ENCODE measurements at regions of chr5 and their contacts with region 1.

Region 1: DNA sequence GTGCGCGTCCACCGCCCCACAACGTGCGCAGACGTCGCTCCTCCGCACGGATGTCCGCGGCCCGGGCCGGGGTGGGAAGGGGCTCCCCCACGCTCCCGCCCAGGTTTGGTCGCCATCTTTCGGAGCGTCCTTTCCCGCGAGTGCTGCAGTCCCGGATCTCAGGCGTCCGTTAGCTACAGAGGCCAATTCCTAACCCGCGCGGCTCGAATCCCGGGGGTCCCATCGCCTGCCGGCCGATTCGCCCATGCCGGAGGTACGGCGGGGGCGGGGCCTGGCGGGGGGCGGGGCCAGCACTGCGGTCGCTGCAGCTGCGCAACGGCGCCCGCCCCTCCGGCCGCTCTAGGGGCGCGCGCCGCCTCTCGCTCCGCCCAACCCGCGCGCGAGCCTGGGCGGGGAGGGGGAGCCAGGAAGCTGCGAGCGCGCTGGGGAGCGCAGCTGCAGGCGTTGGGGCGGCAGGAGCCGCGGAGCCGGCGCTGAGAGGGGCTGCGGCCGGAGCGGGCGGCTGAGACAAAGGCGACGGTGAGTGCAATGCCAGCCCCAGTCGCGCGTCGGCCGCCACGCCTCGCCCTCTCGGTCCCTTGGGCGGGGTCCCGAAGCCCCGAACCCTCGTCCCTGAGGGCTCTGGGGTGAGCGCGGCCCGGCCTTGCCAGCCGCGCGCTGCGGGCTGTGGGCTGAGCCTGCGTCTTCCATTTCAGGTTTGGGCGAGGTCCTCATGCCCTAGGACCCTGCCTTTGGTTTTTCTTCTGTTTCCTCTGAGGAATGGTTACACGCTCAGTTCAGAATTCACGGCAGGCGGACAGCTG is at the start of gene CDC42SE2:
- DNase-seq: peak; percentile 81 to 92 (median 88)
- ATAC-seq: peak; percentile 78 to 84
- H3K4me3 Mint-ChIP-seq: peak within 1 kb of the TSS; percentile 79 to 98 (median 91)
- H3K27ac Mint-ChIP-seq: peak within 1 kb of the TSS; percentile 93 to 98 (median 96)
- H3K4me1 Mint-ChIP-seq: peaks cover 11 to 64% (median 39%) of the 10 kb centered on the region in 4 donors
- H3K27me3 Mint-ChIP-seq: no peaks in the 10 kb centered on the region
- polyA plus RNA-seq, gene CDC42SE2: 423 to 544 (median 480) TPM

Region 2: DNA sequence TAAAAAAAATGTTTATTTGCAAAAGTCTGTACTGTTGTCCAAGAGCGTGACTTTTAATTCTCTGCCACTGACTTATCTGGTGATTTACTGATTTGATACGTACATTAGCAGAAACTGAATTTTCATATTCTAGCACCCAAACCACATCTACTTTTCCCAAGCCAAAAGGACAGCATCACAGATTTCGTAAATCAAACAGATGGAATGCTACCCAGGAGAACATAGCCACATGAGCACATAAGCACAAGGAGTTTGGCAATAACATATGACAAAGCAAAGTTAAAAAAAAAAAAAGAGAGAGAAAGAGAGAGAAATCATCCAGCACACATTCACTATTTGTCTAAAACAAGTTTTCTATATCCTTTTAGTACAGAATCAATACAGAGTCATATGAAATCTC is 182.5 kb before region 1 on chr5:
- POLR2A ChIA-PET with region 1: no interaction called
- DNase-seq: no peak
- ATAC-seq: no peak
- H3K4me3 Mint-ChIP-seq: no peak overlapping the region
- H3K27ac Mint-ChIP-seq: no peak overlapping the region
- H3K4me1 Mint-ChIP-seq: peaks cover 5 to 25% (median 20%) of the 10 kb centered on the region in 4 donors
- H3K27me3 Mint-ChIP-seq: no peaks in the 10 kb centered on the region

Region 3: GRCh38 chr5:131170540-131171275 is 93.1 kb before region 1 on chr5 and contains the start of gene LYRM7:
- POLR2A ChIA-PET with region 1: interaction called, 63 read pairs
- DNase-seq: peak; percentile 77 to 99 (median 96)
- ATAC-seq: peak; percentile 94
- H3K4me3 Mint-ChIP-seq: peak within 1 kb of the TSS; percentile 94 to 100 (median 98)
- H3K27ac Mint-ChIP-seq: peak within 1 kb of the TSS; percentile 88 to 99 (median 96)
- H3K4me1 Mint-ChIP-seq: peaks cover 32 to 59% (median 49%) of the 10 kb centered on the region in 4 donors
- H3K27me3 Mint-ChIP-seq: no peaks in the 10 kb centered on the region
- polyA plus RNA-seq, gene LYRM7: 9.3 to 13.6 (median 9.8) TPM

Region 4: GRCh38 chr5:131252824-131253171 is 11.1 kb before region 1 on chr5:
- POLR2A ChIA-PET with region 1: interaction called, 159 read pairs
- DNase-seq: peak; percentile 57 to 91 (median 81)
- ATAC-seq: peak; percentile 79 to 89
- H3K4me3 Mint-ChIP-seq: peak overlapping the region; percentile 81 to 98 (median 94)
- H3K27ac Mint-ChIP-seq: peak overlapping the region; percentile 85 to 100 (median 96)
- H3K4me1 Mint-ChIP-seq: peaks cover 30 to 81% (median 74%) of the 10 kb centered on the region in 4 donors
- H3K27me3 Mint-ChIP-seq: no peaks in the 10 kb centered on the region

Region 5: DNA sequence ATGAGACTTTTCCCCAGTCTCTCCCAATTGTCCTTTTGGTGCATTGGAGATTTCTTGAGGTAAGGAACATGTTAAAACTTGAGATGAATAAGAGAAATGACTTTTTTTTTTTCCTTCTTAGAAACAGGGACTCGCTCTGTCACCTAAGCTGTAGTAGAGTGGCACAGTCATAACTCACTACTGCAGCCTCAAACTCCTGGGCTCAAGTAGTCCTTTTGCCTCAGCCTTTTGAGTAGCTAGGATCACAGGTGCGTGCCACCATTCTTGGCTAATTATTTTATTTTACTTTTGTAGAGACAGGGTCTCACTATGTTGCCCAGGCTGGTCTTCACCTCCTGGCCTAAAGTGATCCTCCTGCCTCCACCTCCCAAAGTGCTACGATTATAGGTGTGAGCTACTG is 25.9 kb after region 1 on chr5:
- POLR2A ChIA-PET with region 1: interaction called, 36 read pairs
- DNase-seq: no peak
- ATAC-seq: peak; percentile 49 to 50
- H3K4me3 Mint-ChIP-seq: peak overlapping the region; percentile 79 to 91 (median 88)
- H3K27ac Mint-ChIP-seq: peak overlapping the region; percentile 95 to 98 (median 97)
- H3K4me1 Mint-ChIP-seq: peaks cover 24 to 92% (median 68%) of the 10 kb centered on the region in 4 donors
- H3K27me3 Mint-ChIP-seq: no peaks in the 10 kb centered on the region

Region 6: GRCh38 chr5:131375351-131375750 is 111.5 kb after region 1 on chr5:
- POLR2A ChIA-PET with region 1: interaction called, 159 read pairs
- DNase-seq: peak in 1 of 10 donors; percentile 31
- ATAC-seq: peak in 1 of 2 donors; percentile 18
- H3K4me3 Mint-ChIP-seq: peak overlapping the region in 9 of 10 donors; percentile 9 to 75 (median 29)
- H3K27ac Mint-ChIP-seq: peak overlapping the region; percentile 91 to 100 (median 95)
- H3K4me1 Mint-ChIP-seq: peaks cover 27 to 98% (median 85%) of the 10 kb centered on the region in 4 donors
- H3K27me3 Mint-ChIP-seq: no peaks in the 10 kb centered on the region

Region 7: DNA sequence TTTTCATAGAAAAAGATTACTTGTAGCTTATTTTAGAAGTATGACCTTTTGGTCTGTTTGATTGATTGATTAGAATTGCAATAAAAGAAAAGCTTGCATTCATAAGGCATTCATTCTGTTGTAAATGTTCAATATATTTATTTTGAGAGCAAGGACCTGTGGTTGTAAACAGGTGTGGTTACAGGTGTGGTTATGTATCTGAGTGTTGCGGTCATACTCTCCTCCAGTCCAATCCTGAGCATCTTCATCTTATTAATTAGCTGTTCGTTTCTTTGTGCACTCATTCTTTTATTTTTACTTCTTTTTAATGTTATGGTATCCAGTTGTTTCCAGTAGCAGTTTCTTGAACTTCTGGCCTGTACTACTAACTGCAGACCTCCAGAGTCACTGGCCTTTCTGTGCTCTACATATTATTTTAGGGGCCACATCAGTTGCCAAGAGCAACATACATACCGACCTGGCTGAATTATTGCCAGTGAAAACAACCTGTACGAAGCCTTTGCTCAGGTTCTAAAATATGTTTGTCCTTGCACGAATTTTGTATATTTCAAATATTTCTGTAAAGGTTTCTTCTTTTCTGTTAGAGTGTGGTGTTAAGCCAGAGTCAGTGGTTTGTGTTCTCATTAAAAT is 128.7 kb after region 1 on chr5:
- POLR2A ChIA-PET with region 1: interaction called, 11 read pairs
- DNase-seq: no peak
- ATAC-seq: no peak
- H3K4me3 Mint-ChIP-seq: peak overlapping the region in 8 of 10 donors; percentile 8 to 77 (median 32)
- H3K27ac Mint-ChIP-seq: peak overlapping the region; percentile 62 to 100 (median 94)
- H3K4me1 Mint-ChIP-seq: peaks cover 34 to 91% (median 76%) of the 10 kb centered on the region in 4 donors
- H3K27me3 Mint-ChIP-seq: no peaks in the 10 kb centered on the region